ENCODE measurements at regions of chr5 and their contacts with region 1.

Region 1: DNA sequence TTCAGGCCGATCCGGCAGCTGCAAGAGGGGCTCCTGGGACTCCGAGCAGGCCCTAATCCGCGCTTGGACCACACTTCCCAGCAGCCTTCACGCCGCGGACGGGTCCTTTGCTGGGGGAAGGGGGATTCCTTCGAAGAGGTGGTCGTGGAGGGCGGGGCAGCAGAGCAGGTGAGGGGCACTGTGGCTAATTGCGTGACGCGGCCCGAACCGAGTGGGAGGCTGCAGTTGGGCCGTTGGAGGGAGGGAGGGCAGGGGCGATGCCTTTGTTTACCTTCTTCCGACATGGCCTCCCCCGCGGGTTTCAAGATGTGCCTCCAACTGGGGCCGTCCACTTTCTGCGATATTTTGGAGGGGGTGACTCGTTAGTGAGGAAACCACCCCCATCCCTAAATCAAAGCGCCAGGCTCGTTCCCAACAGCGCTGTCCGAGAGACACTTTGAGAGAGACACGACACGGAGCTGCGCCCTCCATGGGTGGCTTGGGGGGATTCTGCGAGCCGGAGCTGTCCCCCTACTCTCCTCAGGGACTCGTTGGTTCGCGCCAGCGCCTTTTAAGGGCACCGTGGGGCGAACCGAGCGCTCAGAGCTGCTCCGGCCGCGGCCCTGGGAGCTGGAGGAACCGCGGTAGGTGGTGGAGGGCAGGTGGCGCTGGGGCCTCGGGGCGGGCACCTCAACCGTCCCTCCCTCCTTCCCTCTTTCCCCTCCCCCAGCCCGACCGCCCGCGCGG is at the start of gene FAM53C:
- DNase-seq: peak; percentile 97
- total RNA-seq, gene FAM53C: 23.8 TPM

Region 2: DNA sequence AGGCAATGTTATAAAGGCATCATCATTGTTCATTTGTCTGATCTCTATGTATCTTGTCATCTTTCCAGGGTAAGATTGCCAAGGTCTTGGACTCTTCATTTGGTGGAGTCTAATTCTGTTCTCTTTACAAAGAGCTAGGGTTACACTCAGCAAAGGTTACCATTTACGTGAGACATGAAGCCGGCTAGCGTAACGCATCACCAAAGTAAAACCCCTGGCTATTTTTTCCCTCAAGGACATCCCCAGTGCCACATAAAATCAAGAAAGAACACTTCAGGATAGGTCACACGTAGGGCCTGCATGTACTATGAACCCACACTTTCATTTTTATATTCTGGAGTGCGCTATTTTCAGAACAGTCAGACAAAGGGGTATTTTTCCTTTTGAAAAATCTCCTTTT is 490.2 kb before region 1 on chr5:
- intact Hi-C with region 1: no loop called
- DNase-seq: no peak

Region 3: DNA sequence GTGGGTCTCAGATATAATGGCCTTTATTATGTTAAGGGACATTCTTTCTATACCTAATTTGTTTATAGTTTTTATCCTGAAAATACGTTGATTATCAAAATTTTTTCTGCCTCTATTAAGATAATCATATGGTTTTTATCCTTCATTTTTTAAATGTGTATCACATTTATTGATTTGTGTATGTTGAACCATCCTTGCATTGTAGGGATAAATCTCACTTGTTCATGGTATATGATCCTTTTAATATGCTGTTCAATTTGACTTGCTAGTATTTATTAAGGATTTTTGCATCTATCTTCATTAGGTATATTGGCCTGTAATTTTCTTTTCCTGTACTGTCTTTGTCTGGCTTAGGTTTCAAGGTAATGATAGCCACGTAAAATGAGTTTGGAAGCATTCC is 423.1 kb before region 1 on chr5:
- intact Hi-C with region 1: no loop called
- DNase-seq: no peak

Region 4: GRCh38 chr5:138178516-138179276 is 159.2 kb before region 1 on chr5 and contains the starts of genes BRD8 and KIF20A:
- intact Hi-C with region 1: loop called (anchors 5 kb)
- DNase-seq: peak; percentile 97
- total RNA-seq, gene BRD8: 31.9 TPM
- total RNA-seq, gene KIF20A: 0.16 TPM

Region 5: GRCh38 chr5:138316355-138316754 is 21.5 kb before region 1 on chr5:
- intact Hi-C with region 1: no loop called
- DNase-seq: no peak

Region 6: DNA sequence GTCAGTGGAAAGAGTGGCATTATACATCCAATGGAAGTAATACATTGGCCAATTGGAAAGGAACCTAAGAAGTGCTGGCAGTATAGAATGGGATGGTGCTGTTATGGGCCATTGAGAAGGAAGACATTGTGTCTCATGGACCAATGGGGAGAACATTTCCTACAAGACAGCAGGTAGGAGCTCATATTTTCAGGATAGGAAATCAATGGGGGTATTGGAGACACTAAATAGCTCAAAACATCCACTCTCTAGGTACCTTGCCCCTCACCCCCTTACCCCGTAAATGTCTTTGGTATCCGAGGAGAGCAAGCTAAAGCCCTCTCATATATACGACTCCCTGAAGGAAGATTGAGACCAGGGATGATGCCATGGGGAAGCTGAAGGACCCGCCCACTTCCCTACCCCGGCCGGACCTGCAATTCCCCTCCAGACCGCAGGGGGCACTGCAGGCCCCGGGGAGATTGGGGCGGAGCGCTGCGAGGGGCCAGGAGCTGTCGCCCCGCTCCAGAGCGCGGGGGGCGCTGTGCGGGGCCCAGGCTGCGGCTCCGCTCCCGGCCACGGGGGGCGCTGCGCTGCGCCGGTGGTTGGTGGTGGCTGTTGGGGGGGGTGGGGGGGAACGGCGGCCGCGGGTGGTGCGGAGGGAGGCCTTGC is 14.3 kb after region 1 on chr5 and contains the start of gene KDM3B:
- intact Hi-C with region 1: loop called (anchors 2 kb)
- DNase-seq: peak; percentile 95
- total RNA-seq, gene KDM3B: 48.5 TPM